CD4-positive, alpha-beta memory T cell (primary cell): ENCODE measurements at regions of chr1 and their contacts with region 1.

Region 1: DNA sequence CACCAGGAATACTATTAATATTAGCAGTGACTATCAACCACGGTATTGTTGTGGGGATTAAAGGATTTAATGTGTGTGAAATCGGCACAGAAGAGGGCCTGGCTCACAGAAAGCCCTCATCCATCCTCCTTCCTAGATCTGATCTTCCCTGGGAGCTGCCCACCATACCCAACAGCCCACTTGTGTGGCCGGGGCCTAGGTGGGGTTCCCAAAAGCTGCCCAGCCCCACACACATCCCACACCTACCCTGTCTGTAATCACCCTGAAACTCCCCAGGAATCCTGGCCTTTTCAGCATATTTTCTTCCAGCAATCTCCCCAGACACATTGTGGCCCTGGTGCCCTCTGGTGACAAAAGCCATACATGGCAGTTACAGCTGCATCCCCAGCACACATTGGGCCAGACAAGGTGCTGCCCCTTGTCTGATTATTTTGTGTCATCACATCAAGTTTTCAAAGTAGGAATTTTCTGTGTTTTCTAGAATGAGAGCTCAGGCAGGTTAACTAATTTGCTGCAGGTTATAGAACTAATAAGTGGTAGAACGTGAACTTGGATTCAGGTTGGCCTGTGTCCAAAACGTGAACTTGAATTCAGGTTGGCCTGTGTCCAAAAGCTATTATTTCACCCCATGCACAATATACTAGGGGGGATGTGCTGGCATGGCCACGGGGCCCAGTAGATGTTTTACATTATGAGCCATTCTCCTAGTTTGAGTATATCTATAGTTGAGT is 5.3 kb upstream of the SLC6A9 start:
- DNase-seq: peak; percentile 59 to 67 (median 61)
- H3K4me3 ChIP-seq: no peak overlapping the region
- H3K4me3 Mint-ChIP-seq: peak overlapping the region in 1 of 8 donors; percentile 0
- H3K27ac ChIP-seq: no peak overlapping the region
- H3K27ac Mint-ChIP-seq: peak overlapping the region in 1 of 7 donors; percentile 27
- H3K4me1 ChIP-seq: peaks cover 9% of the 10 kb centered on the region
- H3K4me1 Mint-ChIP-seq: peaks cover 5 to 19% (median 9%) of the 10 kb centered on the region in 4 donors
- H3K27me3 ChIP-seq: no peaks in the 10 kb centered on the region
- H3K27me3 Mint-ChIP-seq: no peaks in the 10 kb centered on the region

Region 2: DNA sequence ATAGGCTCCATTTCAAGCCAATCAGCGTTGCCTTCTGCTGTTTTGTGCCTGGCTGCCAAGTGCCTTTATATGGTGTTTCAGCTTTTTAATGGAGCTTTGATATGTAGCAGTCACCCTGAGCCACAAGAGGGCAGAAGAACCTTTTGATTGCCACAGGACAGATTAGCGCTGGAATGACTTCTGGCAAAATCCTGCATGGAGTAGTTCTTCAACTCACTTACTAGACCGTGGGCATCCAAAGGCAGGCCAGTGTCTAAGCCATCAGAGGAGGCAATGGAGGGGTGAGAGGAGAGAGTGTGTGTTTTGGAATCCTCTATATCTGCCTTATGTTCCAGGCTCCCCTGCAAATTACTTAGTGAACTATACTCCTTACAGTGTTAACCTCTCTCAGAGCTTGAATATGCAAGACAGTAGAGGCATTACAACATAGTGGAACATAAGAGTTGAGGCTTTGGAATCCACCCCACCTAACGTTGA is 273.0 kb before region 1 on chr1:
- CTCF ChIA-PET with region 1: interaction called, 19 read pairs
- POLR2A ChIA-PET with region 1: no interaction called
- intact Hi-C with region 1: no loop called
- DNase-seq: peak; percentile 31 to 49 (median 40)
- H3K4me3 ChIP-seq: no peak overlapping the region
- H3K4me3 Mint-ChIP-seq: no peak overlapping the region
- H3K27ac ChIP-seq: no peak overlapping the region
- H3K27ac Mint-ChIP-seq: no peak overlapping the region
- H3K4me1 ChIP-seq: no peaks in the 10 kb centered on the region
- H3K4me1 Mint-ChIP-seq: peaks cover 0 to 9% (median 3%) of the 10 kb centered on the region in 4 donors
- H3K27me3 ChIP-seq: no peaks in the 10 kb centered on the region
- H3K27me3 Mint-ChIP-seq: no peaks in the 10 kb centered on the region

Region 3: GRCh38 chr1:44002606-44003157 is 33.9 kb before region 1 on chr1:
- CTCF ChIA-PET with region 1: interaction called, 225 read pairs
- POLR2A ChIA-PET with region 1: interaction called, 10 read pairs
- intact Hi-C with region 1: loop called (anchors 1 kb)
- DNase-seq: no peak
- H3K4me3 ChIP-seq: no peak overlapping the region
- H3K4me3 Mint-ChIP-seq: no peak overlapping the region
- H3K27ac ChIP-seq: no peak overlapping the region
- H3K27ac Mint-ChIP-seq: no peak overlapping the region
- H3K4me1 ChIP-seq: no peaks in the 10 kb centered on the region
- H3K4me1 Mint-ChIP-seq: peaks cover 0 to 2% (median 0%) of the 10 kb centered on the region in 4 donors
- H3K27me3 ChIP-seq: no peaks in the 10 kb centered on the region
- H3K27me3 Mint-ChIP-seq: no peaks in the 10 kb centered on the region

Region 4: GRCh38 chr1:44021581-44022321 is 14.8 kb before region 1 on chr1:
- CTCF ChIA-PET with region 1: interaction called, 14 read pairs
- POLR2A ChIA-PET with region 1: no interaction called
- intact Hi-C with region 1: no loop called
- DNase-seq: no peak
- H3K4me3 ChIP-seq: no peak overlapping the region
- H3K4me3 Mint-ChIP-seq: no peak overlapping the region
- H3K27ac ChIP-seq: no peak overlapping the region
- H3K27ac Mint-ChIP-seq: no peak overlapping the region
- H3K4me1 ChIP-seq: no peaks in the 10 kb centered on the region
- H3K4me1 Mint-ChIP-seq: no peaks in the 10 kb centered on the region
- H3K27me3 ChIP-seq: no peaks in the 10 kb centered on the region
- H3K27me3 Mint-ChIP-seq: peaks cover 0 to 2% of the 10 kb centered on the region in 2 donors